Right ventricle myocardium inferior (tissue), 1 donor: ENCODE measurements at regions of chr4 and their contacts with region 1.

Region 1: DNA sequence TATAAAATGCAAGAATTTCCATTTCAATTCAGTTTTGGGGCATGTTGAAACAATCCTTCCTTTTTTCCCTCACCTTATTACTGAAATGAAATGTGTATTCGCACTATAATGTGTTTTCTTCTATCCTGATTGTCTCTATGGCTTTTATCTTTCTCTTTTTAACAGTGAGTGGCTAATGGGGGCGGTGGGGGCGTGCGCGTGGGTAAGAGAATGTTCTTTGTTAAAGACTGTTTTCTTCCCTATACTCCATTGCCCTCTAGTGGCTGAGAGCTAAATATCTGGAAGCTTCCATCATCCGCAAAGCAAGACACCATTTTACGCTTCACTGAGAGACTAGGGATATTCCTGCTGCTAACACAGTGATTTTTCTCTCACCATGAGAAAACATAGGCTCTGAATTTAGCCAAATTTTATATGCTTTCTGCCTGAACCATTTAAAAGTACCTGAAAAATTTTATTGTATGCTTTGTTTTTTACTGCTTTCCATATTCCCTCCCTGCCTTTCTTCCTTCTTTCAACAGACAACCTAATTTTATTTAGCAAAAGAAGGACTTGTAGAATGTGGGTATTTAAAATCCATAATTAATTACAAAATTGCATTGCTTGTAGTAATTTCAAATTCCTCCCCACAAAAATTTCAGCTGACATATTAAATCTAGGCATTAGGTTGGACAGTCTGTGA is 194.0 kb downstream of the GASK1B start:
- DNase-seq: peak; percentile 69
- ATAC-seq: peak; percentile 64

Region 2: DNA sequence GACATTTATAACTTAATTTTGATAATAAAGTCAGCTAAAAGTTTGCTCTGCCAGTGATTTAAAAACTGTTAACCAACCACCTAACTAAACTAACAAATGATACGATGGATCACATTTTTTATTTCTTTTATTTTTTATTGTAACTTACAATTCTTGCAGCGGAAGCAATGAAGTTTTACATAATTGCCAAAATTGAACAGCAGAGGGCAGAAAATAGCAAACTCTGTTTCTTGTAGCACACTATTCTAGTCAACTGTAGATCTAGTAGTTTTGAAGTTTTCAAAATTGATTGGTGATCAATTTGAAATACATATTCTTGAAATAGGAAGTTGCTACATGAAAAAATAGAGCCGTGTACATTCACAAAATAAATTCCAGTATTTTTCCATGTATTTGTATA is 761.1 kb before region 1 on chr4:
- intact Hi-C with region 1: loop called (anchors 10 kb)
- DNase-seq: no peak
- ATAC-seq: no peak

Region 3: GRCh38 chr4:157804986-157805385 is 173.8 kb before region 1 on chr4:
- intact Hi-C with region 1: no loop called
- DNase-seq: no peak
- ATAC-seq: no peak